SK-N-SH (cell line): ENCODE measurements at regions of chr2 and their contacts with region 1.

Region 1: GRCh38 chr2:219530048-219530963 is 13.3 kb downstream of the CHPF start:
- DNase-seq: peak; percentile 93
- H3K4me3 ChIP-seq: peak overlapping the region; percentile 28 to 36; a peak in 3 of 4 replicates
- H3K27ac ChIP-seq: peak overlapping the region in 1 of 2 experiments; percentile 12; a peak in 1 of 4 replicates
- H3K4me1 ChIP-seq: peaks cover 0 to 38% of the 10 kb centered on the region in 2 experiments; a peak in 2 of 4 replicates
- H3K27me3 ChIP-seq: no peaks in the 10 kb centered on the region; the same call in 1 of the 2 replicates
- CTCF ChIP-seq: peak; percentile 91
- EP300 ChIP-seq: no peak
- RAD21 ChIP-seq: peak; percentile 99

Region 2: DNA sequence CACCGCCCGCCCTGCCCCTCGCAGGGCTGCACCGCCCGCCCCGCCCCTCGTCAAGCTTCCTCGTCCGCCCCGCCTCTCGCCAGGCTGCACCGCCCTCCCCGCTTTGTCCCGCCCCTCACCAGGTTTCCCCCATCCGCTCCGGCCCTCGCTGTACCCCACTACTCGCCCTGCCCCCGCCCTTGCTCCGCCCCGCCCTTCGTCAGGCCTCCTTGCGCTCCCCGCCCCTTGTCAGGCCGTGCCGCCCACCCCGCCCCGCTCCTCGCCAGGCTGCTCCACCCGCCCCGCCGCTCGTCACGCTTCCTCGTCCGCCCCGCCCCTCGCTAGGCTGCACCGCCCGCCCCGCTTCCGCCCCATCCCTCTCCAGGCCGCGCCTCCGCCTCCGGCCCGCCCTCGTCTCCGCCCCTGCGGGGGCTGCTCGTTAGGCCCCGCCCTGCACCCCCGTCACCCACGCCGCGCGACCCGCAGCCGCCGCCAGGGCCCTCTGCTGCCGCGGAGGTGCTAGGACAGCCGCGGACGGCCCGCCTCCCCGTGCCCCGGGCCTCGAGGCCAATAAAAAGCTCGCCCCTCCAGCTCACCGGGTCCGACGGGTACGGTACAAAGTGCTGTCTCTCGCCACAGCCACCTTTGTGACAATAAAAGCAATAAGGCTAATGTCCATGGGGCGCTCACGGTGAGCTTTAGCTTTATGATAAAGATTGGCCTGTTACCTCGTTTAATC is 142.0 kb before region 1 on chr2:
- CTCF ChIA-PET with region 1: interaction called, 52 read pairs
- POLR2A ChIA-PET with region 1: interaction called, 5 read pairs
- DNase-seq: peak; percentile 99
- H3K4me3 ChIP-seq: peak overlapping the region in 1 of 2 experiments; percentile 43; a peak in 2 of 4 replicates
- H3K27ac ChIP-seq: peak overlapping the region; percentile 43 to 75; a peak in 3 of 4 replicates
- H3K4me1 ChIP-seq: peaks cover 3 to 16% of the 10 kb centered on the region in 2 experiments; a peak in 1 of 4 replicates
- H3K27me3 ChIP-seq: no peaks in the 10 kb centered on the region
- CTCF ChIP-seq: peak; percentile 64
- EP300 ChIP-seq: no peak
- RAD21 ChIP-seq: no peak

Region 3: GRCh38 chr2:219430633-219431615 is 99.4 kb before region 1 on chr2:
- CTCF ChIA-PET with region 1: interaction called, 34 read pairs
- POLR2A ChIA-PET with region 1: interaction called, 4 read pairs
- DNase-seq: peak; percentile 89
- H3K4me3 ChIP-seq: no peak overlapping the region
- H3K27ac ChIP-seq: peak overlapping the region in 1 of 2 experiments; percentile 77; a peak in 2 of 4 replicates
- H3K4me1 ChIP-seq: peaks cover 0 to 13% of the 10 kb centered on the region in 2 experiments; a peak in 1 of 4 replicates
- H3K27me3 ChIP-seq: no peaks in the 10 kb centered on the region
- CTCF ChIP-seq: peak; percentile 50
- EP300 ChIP-seq: 0 out of 4 replicates have a peak, but pooled peaks of 1 of the 2 experiments have one; percentile 10
- RAD21 ChIP-seq: peak; percentile 85

Region 4: GRCh38 chr2:219441451-219442255 is 88.7 kb before region 1 on chr2:
- CTCF ChIA-PET with region 1: interaction called, 36 read pairs
- POLR2A ChIA-PET with region 1: interaction called, 4 read pairs
- DNase-seq: peak; percentile 98
- H3K4me3 ChIP-seq: peak overlapping the region; percentile 67 to 76
- H3K27ac ChIP-seq: peak overlapping the region; percentile 52 to 84; a peak in 3 of 4 replicates
- H3K4me1 ChIP-seq: peaks cover 45 to 49% of the 10 kb centered on the region in 2 experiments
- H3K27me3 ChIP-seq: no peaks in the 10 kb centered on the region
- CTCF ChIP-seq: no peak; the same call in 1 of the 2 replicates
- EP300 ChIP-seq: no peak
- RAD21 ChIP-seq: no peak

Region 5: GRCh38 chr2:219509780-219510511 is 20.4 kb before region 1 on chr2:
- CTCF ChIA-PET with region 1: interaction called, 2,824 read pairs
- POLR2A ChIA-PET with region 1: interaction called, 210 read pairs
- DNase-seq: peak; percentile 83
- H3K4me3 ChIP-seq: peak overlapping the region; percentile 36 to 46; a peak in 3 of 4 replicates
- H3K27ac ChIP-seq: peak overlapping the region in 1 of 2 experiments; percentile 96; a peak in 2 of 4 replicates
- H3K4me1 ChIP-seq: peaks cover 3 to 99% of the 10 kb centered on the region in 2 experiments; a peak in 2 of 4 replicates
- H3K27me3 ChIP-seq: peaks cover 21% of the 10 kb centered on the region
- CTCF ChIP-seq: peak; percentile 76
- EP300 ChIP-seq: peak in 1 of 2 experiments; percentile 13; a peak in 1 of 4 replicates
- RAD21 ChIP-seq: peak; percentile 77